ENCODE measurements at regions of chr4 and their contacts with region 1.

Region 1: DNA sequence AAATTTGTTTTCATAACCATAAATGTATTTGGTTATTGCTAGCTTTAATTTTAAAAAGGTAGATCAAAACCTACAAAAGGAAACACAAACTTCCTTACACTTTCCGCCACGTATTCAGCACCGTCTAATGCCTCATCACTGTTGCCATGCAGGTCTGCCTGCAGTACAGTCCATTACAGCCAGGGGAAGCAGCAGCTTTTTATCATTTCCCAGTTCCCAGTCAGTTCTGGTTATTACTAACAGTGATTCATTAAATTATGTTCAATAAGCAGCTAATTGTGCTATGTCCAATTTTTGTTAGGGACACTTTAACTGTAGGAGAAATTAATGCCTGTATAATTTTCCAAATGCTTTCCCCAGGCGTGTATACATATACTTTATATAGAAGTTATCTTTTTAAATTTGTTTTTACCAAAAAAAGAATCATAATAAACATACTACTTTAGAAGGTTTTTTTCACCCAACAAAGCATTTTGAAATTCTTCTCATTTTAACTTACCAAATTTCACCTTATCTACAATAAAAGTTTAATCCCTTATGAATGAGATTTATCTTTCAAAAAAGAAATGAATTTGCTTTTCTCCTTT is 93.3 kb downstream of the ANXA3 start:
- DNase-seq: peak; percentile 82 to 85 (median 84)
- H3K4me3 ChIP-seq: no peak overlapping the region
- H3K27ac ChIP-seq: no peak overlapping the region
- H3K4me1 ChIP-seq: peaks cover 2 to 56% (median 38%) of the 10 kb centered on the region in 4 experiments
- H3K27me3 ChIP-seq: no peaks in the 10 kb centered on the region

Region 2: GRCh38 chr4:78629991-78630541 is 14.8 kb before region 1 on chr4:
- CTCF ChIA-PET with region 1: interaction called, 23 read pairs
- POLR2A ChIA-PET with region 1: no interaction called
- DNase-seq: peak in 2 of 3 donors; percentile 61 to 70
- H3K4me3 ChIP-seq: no peak overlapping the region
- H3K27ac ChIP-seq: peak overlapping the region in 1 of 2 experiments; percentile 65
- H3K4me1 ChIP-seq: peaks cover 3 to 39% (median 27%) of the 10 kb centered on the region in 4 experiments
- H3K27me3 ChIP-seq: no peaks in the 10 kb centered on the region

Region 3: DNA sequence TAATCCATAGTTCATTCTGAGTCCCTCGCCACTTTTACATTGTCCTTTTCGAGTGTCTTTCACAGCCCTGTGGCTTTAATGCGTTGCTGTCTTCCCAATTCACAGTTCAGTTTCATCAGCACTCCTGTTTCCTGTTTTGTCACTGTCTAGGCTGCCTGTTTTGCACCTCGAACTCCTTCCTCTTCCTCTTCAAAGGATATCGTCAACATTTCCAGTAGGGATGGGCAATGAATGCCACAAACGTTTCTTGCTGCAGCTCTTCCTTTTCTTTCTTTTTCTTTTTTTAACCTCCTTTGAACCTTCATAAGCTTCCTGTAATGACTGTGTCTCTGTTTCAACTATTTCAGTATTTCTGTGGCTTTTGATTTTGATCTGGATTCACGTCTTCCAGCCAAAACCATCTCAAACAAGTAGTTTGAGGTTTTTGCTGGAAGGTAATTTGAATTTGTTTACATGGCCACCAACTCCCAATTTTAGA is 12.2 kb after region 1 on chr4:
- CTCF ChIA-PET with region 1: interaction called, 24 read pairs
- POLR2A ChIA-PET with region 1: no interaction called
- DNase-seq: peak in 2 of 3 donors; percentile 44 to 56
- H3K4me3 ChIP-seq: peak overlapping the region in 6 of 7 experiments; percentile 13 to 65 (median 39)
- H3K27ac ChIP-seq: peak overlapping the region in 1 of 2 experiments; percentile 63
- H3K4me1 ChIP-seq: peaks cover 40 to 70% (median 56%) of the 10 kb centered on the region in 4 experiments
- H3K27me3 ChIP-seq: no peaks in the 10 kb centered on the region

Region 4: DNA sequence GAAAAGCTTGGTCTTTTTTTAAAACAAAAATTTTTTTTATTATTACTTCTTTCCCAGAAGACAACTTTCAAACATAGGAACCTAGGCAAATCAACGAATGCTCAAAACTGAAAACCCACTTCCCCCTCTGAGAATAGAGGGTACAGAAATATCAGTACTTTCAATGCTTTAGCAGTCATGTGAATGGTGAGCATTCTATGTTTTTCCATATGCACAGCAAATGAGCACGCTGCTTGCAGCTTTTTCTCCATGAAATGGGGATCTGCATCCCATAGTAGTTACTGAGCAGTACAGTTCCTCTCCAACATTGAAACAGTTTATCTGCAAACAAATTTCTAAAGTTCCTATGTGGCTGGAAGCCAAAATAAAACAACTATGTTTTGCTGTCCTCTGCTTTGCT is 22.9 kb after region 1 on chr4:
- CTCF ChIA-PET with region 1: interaction called, 10 read pairs
- POLR2A ChIA-PET with region 1: no interaction called
- DNase-seq: peak in 1 of 3 donors; percentile 46
- H3K4me3 ChIP-seq: no peak overlapping the region
- H3K27ac ChIP-seq: peak overlapping the region in 1 of 2 experiments; percentile 9
- H3K4me1 ChIP-seq: peaks cover 13 to 41% (median 29%) of the 10 kb centered on the region in 4 experiments
- H3K27me3 ChIP-seq: no peaks in the 10 kb centered on the region

Measured in common myeloid progenitor, CD34-positive (primary cell).